ENCODE measurements at regions of chr7 and their contacts with region 1.

Region 1: DNA sequence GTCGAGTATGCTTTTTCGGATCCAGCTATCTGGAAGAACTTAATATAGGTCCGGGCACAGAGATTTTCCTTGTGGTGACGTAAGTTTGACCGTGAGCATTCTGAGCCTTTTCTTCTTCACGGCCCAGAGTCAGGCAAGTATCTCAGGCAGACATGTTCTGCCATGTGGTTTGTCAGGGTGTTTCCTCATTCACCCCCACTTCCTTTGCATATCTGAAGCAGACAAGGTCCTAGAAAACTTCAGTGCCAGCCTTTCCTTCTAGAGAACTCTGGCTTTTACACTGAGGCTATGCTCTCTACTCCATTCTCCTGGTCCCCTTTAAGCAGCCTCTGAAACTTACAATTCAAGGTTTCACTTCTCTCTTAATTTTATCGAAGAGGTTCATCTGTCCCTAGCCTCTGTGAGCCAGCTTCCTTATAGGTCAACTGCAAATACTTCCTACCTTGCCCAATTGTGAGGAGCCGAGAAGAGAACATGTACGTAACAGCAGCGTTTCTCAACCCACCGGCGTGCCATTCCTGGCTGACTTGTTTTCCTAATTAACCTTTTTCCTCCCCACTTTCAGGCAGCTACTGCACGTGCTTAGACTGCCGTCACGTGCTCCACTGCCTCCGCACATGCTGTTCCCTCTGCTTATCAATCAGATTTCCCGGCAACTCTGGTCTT is 47.3 kb downstream of the CDCA7L start:
- DNase-seq: peak; percentile 62
- ATAC-seq: peak; percentile 97
- H3K4me3 ChIP-seq: peak overlapping the region; percentile 17; the same call in 1 of the 2 replicates
- H3K27ac ChIP-seq: peak overlapping the region; percentile 46
- H3K4me1 ChIP-seq: peaks cover 9% of the 10 kb centered on the region
- H3K27me3 ChIP-seq: no peaks in the 10 kb centered on the region
- CTCF ChIP-seq: no peak
- EP300 ChIP-seq: 0 out of 4 replicates have a peak, but pooled peaks of 1 of the 2 experiments have one; percentile 26
- POLR2A ChIP-seq: peak; percentile 10; the same call in 1 of the 2 replicates
- RAD21 ChIP-seq: no peak

Region 2: DNA sequence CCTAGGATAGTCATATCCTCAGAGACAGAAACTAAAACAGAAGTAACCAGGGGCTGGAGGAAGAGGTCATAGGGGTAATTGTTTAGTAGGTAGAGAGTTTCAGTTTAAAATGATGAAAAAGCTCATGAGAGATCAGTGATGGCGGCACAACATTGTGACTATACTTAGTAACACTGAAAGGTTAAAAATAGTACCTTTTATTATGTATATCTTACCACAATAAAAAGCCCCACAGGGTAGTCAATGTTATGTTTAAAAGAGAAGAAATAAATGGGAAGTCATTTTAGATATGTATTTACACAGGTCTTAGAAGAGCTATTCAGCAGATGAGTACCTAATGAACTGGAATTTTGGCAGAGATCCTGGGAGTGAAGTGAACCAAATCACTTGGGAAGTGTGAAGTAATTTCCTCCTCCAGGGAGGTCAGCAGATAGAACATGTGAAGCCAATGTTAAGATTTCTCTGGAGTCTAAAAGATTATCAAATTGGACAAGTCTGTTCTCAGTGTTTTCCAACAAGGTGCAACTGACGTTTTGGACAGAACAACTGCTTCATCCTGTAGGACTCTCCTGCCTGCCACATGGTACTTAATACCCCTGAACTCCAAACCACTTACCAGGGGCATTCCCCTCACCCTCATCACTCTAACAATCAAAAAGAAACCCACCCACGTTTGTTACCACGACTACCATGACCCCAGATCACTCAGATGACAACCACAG is 40.9 kb after region 1 on chr7:
- CTCF ChIA-PET with region 1: interaction called, 3 read pairs
- POLR2A ChIA-PET with region 1: interaction called, 3 read pairs
- RAD21 ChIA-PET with region 1: interaction called, 9 read pairs
- SMC1A ChIA-PET with region 1: interaction called, 9 read pairs
- in situ Hi-C with region 1: no loop called
- intact Hi-C with region 1: loop called (anchors 2 kb)
- DNase-seq: peak; percentile 82
- ATAC-seq: peak; percentile 78
- H3K4me3 ChIP-seq: peak overlapping the region; percentile 31; the same call in 1 of the 2 replicates
- H3K27ac ChIP-seq: peak overlapping the region; percentile 78
- H3K4me1 ChIP-seq: peaks cover 37% of the 10 kb centered on the region
- H3K27me3 ChIP-seq: no peaks in the 10 kb centered on the region
- CTCF ChIP-seq: no peak
- EP300 ChIP-seq: peak; percentile 92; a peak in 3 of 4 replicates
- POLR2A ChIP-seq: no peak
- RAD21 ChIP-seq: no peak

Region 3: DNA sequence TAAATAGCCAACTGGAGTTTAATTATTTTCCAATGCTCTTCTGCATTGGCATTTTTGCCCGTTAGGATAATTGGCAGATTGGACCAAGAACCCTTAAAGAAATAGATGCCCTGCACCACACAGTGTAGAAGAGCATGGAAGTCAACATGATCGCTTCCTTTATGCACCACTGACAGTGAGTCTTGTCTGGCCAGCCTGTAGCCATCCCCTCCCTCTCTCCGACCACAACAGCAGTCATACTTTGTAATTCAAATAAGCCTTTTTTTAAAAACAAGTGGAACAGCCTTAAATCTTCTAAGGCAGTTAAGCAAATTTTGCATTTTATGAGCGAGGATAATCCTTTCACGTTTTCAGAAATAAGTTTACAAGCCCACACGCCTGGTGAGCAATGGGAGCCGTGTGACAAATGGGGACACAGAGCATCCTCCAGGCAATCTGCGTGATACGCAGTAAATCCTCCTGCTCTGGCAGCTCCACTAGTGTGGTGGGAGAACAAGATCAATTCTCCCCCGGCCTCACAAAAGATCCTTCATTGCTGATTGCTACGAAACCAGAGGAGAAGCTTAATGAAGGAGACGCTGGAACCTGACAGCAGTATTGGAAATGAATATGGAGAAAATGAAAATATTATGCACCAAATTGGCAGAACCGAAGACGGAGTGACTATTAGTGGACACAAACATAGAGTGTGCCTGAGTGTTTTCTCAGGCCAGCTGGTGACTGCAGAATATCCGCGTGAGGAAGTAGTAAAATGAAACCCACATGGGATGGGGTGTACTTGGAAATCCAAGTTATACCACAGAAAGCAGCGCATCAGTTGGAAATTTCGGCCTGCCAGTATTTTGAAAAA is 151.5 kb after region 1 on chr7:
- CTCF ChIA-PET with region 1: no interaction called
- POLR2A ChIA-PET with region 1: no interaction called
- RAD21 ChIA-PET with region 1: no interaction called
- SMC1A ChIA-PET with region 1: no interaction called
- in situ Hi-C with region 1: no loop called
- intact Hi-C with region 1: no loop called
- DNase-seq: no peak
- ATAC-seq: no peak
- H3K4me3 ChIP-seq: no peak overlapping the region
- H3K27ac ChIP-seq: no peak overlapping the region
- H3K4me1 ChIP-seq: no peaks in the 10 kb centered on the region
- H3K27me3 ChIP-seq: no peaks in the 10 kb centered on the region; a peak in 1 of 4 replicates
- CTCF ChIP-seq: no peak
- EP300 ChIP-seq: no peak
- POLR2A ChIP-seq: no peak
- RAD21 ChIP-seq: no peak